Heart left ventricle (tissue), 16 donors: ENCODE measurements at regions of chr2 and their contacts with region 1.

Region 1: GRCh38 chr2:32010670-32011484 is at the start of gene MEMO1:
- DNase-seq: peak; percentile 95 to 97 (median 96)
- ATAC-seq: peak; percentile 90 to 94 (median 92)
- H3K4me3 ChIP-seq: peak within 1 kb of the TSS; percentile 28 to 98 (median 88)
- H3K27ac ChIP-seq: peak within 1 kb of the TSS; percentile 90 to 99 (median 94)
- H3K4me1 ChIP-seq: peaks cover 0 to 47% (median 26%) of the 10 kb centered on the region in 12 donors
- H3K27me3 ChIP-seq: no peaks in the 10 kb centered on the region
- CTCF ChIP-seq: no peak
- POLR2A ChIP-seq: peak in 1 of 2 donors; percentile 73
- total RNA-seq, gene MEMO1: 20.1 to 73.3 (median 53.0) TPM

Region 2: DNA sequence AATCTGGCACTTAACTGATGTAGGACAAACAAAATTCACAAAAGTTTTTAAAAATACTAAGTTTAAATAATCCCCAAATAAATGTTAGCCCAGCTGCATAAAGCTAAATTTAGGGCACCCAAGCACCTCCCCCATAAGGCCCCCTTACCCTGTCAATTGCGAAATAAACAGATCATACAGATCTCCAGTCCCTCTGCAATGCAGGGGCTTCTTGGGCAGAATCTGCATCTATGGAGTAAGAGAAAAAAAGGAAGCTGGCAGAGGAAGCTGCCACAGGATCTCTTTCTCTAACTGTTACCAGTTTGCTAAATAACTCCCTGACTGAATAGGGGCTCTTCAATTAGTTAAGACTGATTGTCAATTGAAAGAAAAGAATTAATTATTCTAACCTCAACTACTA is 117.8 kb before region 1 on chr2:
- intact Hi-C with region 1: loop called in 1 of 10 experiments (anchors 10 kb)
- DNase-seq: no peak
- ATAC-seq: no peak
- H3K4me3 ChIP-seq: no peak overlapping the region
- H3K27ac ChIP-seq: no peak overlapping the region
- H3K4me1 ChIP-seq: peaks cover 0 to 25% (median 0%) of the 10 kb centered on the region in 12 donors
- H3K27me3 ChIP-seq: no peaks in the 10 kb centered on the region
- CTCF ChIP-seq: no peak
- POLR2A ChIP-seq: no peak

Region 3: DNA sequence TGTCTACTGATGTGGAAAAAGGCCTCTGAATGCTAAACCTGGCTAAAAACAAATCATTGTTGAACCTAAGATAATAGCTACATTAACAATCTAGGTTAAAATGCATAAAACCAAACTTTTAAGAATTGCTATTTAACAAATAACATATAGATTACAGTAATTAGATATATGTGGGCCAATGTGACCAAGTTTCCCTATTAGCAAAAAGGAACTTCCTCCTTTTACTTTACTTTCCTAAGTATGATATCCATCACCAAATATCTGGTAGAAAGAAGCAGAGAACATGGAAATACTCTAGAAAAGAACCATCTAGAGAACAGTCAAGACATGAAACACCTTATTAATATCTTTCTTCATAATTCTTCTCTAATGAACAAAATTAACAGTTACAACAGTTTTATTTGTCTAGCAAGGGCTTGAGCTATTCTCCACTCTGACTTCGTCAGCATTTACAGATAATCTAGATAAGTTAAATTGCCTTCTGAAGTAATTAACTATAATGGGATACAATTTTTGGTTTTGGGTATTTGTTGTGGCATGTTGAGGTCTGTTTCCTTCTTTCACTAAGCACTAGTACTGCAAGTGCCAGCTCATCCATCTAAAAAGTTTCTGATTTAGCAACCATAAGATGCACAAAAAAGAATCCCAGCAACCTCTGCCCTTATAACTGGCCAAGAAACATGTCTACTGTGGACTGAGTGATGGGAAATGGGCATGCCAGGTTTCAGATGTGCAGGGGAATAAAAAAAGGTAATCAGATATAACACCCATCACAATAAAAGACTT is 53.3 kb before region 1 on chr2:
- intact Hi-C with region 1: loop called in 1 of 10 experiments (anchors 5 kb)
- DNase-seq: no peak
- ATAC-seq: no peak
- H3K4me3 ChIP-seq: peak overlapping the region in 1 of 12 donors; percentile 45
- H3K27ac ChIP-seq: peak overlapping the region in 1 of 12 donors; percentile 77
- H3K4me1 ChIP-seq: peaks cover 0 to 52% (median 11%) of the 10 kb centered on the region in 12 donors
- H3K27me3 ChIP-seq: no peaks in the 10 kb centered on the region
- CTCF ChIP-seq: no peak
- POLR2A ChIP-seq: no peak

Region 4: GRCh38 chr2:32135409-32135808 is 124.5 kb after region 1 on chr2:
- intact Hi-C with region 1: loop called in 1 of 10 experiments (anchors 10 kb)
- DNase-seq: no peak
- ATAC-seq: peak in 2 of 4 donors; percentile 30 to 52
- H3K4me3 ChIP-seq: no peak overlapping the region
- H3K27ac ChIP-seq: no peak overlapping the region
- H3K4me1 ChIP-seq: peaks cover 0 to 7% (median 0%) of the 10 kb centered on the region in 12 donors
- H3K27me3 ChIP-seq: no peaks in the 10 kb centered on the region
- CTCF ChIP-seq: peak in 6 of 12 donors; percentile 7 to 33 (median 20)
- POLR2A ChIP-seq: no peak

Region 5: GRCh38 chr2:32168513-32168912 is 157.6 kb after region 1 on chr2:
- intact Hi-C with region 1: loop called in 2 of 10 experiments (anchors 5 to 10 kb)
- DNase-seq: no peak
- ATAC-seq: no peak
- H3K4me3 ChIP-seq: no peak overlapping the region
- H3K27ac ChIP-seq: no peak overlapping the region
- H3K4me1 ChIP-seq: peaks cover 0 to 24% (median 17%) of the 10 kb centered on the region in 12 donors
- H3K27me3 ChIP-seq: no peaks in the 10 kb centered on the region
- CTCF ChIP-seq: no peak
- POLR2A ChIP-seq: no peak